Panc1 (cell line): ENCODE measurements at regions of chr17 and their contacts with region 1.

Region 1: GRCh38 chr17:79081571-79082276 is 7.1 kb downstream of the ENGASE start:
- DNase-seq: no peak
- ATAC-seq: no peak
- H3K4me3 ChIP-seq: no peak overlapping the region
- H3K27ac ChIP-seq: no peak overlapping the region
- H3K4me1 ChIP-seq: no peaks in the 10 kb centered on the region
- H3K27me3 ChIP-seq: no peaks in the 10 kb centered on the region
- CTCF ChIP-seq: no peak

Region 2: DNA sequence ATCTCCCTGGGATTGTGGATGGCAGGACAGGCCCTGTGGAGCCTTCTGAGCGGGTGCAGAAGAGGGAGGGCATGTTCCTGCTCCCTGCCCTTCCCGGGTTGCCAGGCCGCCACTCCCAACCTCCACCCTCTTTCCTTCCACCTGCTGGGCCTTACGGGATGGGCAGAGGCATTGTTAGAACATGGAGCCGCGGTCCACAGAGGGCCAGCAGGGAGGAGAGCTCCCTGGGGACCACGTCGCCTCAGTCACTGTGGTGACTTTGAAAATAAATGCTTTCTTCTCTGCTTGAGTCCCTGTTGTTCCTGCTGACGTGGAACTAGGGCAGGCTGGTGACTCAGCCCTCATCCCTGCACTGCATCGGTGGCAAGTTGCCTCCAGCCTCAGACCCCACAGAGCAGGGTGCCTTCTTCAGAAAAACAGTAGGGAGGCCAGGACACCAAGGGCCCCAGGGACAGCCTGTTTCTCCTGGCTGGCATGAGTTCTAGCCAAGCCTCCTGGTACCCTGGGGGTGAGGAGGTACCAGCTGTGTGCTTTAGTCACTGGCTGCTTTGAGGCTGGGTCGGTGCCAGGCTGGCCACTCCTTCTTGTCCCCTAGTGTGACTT is 1716.0 kb before region 1 on chr17:
- CTCF ChIA-PET with region 1: no interaction called
- POLR2A ChIA-PET with region 1: no interaction called
- in situ Hi-C with region 1: no loop called
- intact Hi-C with region 1: no loop called
- DNase-seq: no peak
- ATAC-seq: peak; percentile 65
- H3K4me3 ChIP-seq: no peak overlapping the region
- H3K27ac ChIP-seq: peak overlapping the region; percentile 82
- H3K4me1 ChIP-seq: peaks cover 76% of the 10 kb centered on the region
- H3K27me3 ChIP-seq: no peaks in the 10 kb centered on the region
- CTCF ChIP-seq: no peak

Region 3: GRCh38 chr17:79231766-79232287 is 150.1 kb after region 1 on chr17:
- CTCF ChIA-PET with region 1: no interaction called
- POLR2A ChIA-PET with region 1: no interaction called
- in situ Hi-C with region 1: no loop called
- intact Hi-C with region 1: no loop called
- DNase-seq: no peak
- ATAC-seq: no peak
- H3K4me3 ChIP-seq: no peak overlapping the region
- H3K27ac ChIP-seq: no peak overlapping the region
- H3K4me1 ChIP-seq: no peaks in the 10 kb centered on the region
- H3K27me3 ChIP-seq: peaks cover 4% of the 10 kb centered on the region; the same call in 1 of the 2 replicates
- CTCF ChIP-seq: no peak

Region 4: DNA sequence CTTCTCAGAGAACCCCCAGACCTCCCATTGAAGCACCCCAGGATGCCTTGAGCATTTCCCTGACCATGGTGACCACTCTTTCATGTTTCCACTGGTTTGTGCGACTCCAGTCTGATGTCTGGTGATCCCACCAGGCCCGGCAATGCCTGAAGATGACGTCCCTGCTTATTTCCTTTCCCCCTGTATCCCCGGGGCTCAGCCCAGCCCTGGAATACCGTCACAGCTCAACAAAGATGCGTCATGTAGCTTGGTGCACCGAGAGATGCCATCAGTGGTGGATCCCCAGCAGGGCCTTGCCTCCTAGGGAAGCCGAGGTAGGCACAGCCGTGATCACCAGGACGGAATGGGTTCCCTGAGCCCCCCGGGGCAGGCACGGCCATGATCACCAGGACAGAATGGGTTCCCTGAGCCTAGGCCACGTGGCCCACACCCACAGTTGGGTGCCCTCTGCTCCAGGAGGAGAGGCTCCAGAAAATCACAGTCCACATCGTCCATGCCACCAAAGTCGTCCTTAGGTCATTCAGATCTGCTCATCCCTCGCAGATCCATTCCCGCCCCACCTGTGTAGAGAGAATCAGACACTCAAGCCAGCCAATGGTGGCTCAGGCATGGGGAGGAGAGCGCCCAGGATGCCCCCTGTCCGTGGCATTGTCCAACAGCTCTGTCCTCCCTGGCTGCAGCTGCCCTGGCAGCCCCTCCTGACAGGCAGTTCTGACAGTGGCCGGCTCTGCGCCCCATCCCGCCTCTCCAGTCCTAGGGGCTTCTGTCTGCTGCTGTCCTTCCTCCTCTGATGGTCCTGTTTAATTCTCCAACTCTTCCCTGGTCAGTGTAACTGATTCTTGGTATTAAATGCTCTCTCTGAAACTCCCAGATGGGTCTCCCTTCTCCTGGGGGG is 268.0 kb after region 1 on chr17:
- CTCF ChIA-PET with region 1: interaction called, 11 read pairs
- POLR2A ChIA-PET with region 1: no interaction called
- in situ Hi-C with region 1: no loop called
- intact Hi-C with region 1: no loop called
- DNase-seq: no peak
- ATAC-seq: no peak
- H3K4me3 ChIP-seq: no peak overlapping the region
- H3K27ac ChIP-seq: no peak overlapping the region
- H3K4me1 ChIP-seq: no peaks in the 10 kb centered on the region
- H3K27me3 ChIP-seq: peaks cover 78% of the 10 kb centered on the region
- CTCF ChIP-seq: no peak

Region 5: GRCh38 chr17:79831367-79832210 is 749.9 kb after region 1 on chr17:
- CTCF ChIA-PET with region 1: no interaction called
- POLR2A ChIA-PET with region 1: no interaction called
- in situ Hi-C with region 1: no loop called
- intact Hi-C with region 1: no loop called
- DNase-seq: no peak
- ATAC-seq: peak; percentile 62
- H3K4me3 ChIP-seq: peak overlapping the region; percentile 11 to 29; a peak in 2 of 4 replicates
- H3K27ac ChIP-seq: peak overlapping the region; percentile 94
- H3K4me1 ChIP-seq: peaks cover 61% of the 10 kb centered on the region
- H3K27me3 ChIP-seq: no peaks in the 10 kb centered on the region
- CTCF ChIP-seq: no peak

Region 6: DNA sequence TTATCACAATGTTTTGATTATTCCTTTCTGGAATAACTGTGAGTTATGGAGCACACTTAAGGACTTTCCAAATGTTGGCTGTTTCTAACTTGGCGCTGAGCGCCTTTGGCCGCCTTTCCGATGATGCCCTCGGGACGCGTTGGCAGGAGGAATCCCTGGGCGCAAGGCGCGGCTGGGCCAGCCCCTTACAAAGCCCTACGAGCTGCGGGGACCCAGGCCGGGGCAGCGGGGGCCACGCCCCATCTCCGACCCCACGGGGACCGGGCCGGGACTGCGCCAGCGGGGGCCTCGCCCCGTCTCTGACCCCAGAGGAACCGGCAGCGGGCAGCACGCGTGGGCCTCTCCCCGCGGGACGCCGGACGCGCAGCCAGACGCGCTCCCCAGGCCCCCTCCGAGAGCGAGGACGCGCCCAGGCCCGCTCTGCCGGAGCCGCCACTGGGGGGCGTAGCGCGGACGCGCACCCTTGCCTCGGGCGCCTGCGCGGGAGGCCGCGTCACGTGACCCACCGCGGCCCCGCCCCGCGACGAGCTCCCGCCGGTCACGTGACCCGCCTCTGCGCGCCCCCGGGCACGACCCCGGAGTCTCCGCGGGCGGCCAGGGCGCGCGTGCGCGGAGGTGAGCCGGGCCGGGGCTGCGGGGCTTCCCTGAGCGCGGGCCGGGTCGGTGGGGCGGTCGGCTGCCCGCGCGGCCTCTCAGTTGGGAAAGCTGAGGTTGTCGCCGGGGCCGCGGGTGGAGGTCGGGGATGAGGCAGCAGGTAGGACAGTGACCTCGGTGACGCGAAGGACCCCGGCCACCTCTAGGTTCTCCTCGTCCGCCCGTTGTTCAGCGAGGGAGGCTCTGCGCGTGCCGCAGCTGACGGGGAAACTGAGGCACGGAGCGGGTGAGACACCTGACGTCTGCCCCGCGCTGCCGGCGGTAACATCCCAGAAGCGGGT is 1019.6 kb after region 1 on chr17 and contains the start of gene GAA:
- CTCF ChIA-PET with region 1: no interaction called
- POLR2A ChIA-PET with region 1: no interaction called
- in situ Hi-C with region 1: no loop called
- intact Hi-C with region 1: no loop called
- DNase-seq: no peak
- ATAC-seq: peak; percentile 91
- H3K4me3 ChIP-seq: peak within 1 kb of the TSS; percentile 76 to 81
- H3K27ac ChIP-seq: peak within 1 kb of the TSS; percentile 88
- H3K4me1 ChIP-seq: peaks cover 11% of the 10 kb centered on the region
- H3K27me3 ChIP-seq: no peaks in the 10 kb centered on the region
- CTCF ChIP-seq: peak; percentile 97
- total RNA-seq, gene GAA: 36.1 TPM